ENCODE measurements at regions of chr13 and their contacts with region 1.

Region 1: GRCh38 chr13:27826379-27827353 is 34.4 kb downstream of the GSX1 start:
- DNase-seq: peak; percentile 76
- H3K4me3 Mint-ChIP-seq: no peak overlapping the region
- H3K27ac Mint-ChIP-seq: no peak overlapping the region
- H3K4me1 Mint-ChIP-seq: peaks cover 8% of the 10 kb centered on the region
- H3K27me3 Mint-ChIP-seq: peaks cover 56% of the 10 kb centered on the region

Region 2: DNA sequence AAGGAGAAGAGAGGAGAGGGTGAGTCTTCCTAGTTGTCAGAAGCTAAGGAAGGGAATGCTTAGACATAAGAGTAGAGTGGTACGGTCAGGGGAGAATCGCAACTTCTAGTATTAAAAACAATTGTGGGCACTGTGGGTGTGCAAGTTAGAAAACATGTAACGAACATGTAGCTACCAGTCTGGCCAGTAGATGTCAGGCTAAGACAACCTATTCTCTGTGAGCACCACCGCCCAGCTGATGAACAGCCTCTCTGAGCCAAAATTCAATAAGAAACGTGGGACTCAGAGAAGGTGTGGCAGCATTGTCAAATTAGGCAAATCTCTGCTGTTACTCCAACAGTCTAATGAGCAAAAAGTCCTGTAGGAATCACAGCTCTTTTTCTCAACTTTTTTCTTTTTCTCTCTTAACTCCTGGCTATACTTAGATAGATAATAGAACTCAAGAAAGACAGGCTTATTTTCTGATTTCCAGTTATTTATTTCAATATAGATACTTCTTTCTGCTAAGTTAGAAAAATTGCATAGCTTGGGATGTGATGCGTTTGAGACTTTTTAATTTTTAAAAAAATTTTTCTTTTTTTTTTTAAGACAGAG is 841.3 kb before region 1 on chr13:
- CTCF ChIA-PET with region 1: interaction called, 16 read pairs
- POLR2A ChIA-PET with region 1: no interaction called
- intact Hi-C with region 1: loop called (anchors 10 kb)
- DNase-seq: peak; percentile 79
- H3K4me3 Mint-ChIP-seq: no peak overlapping the region
- H3K27ac Mint-ChIP-seq: no peak overlapping the region
- H3K4me1 Mint-ChIP-seq: no peaks in the 10 kb centered on the region
- H3K27me3 Mint-ChIP-seq: peaks cover 9% of the 10 kb centered on the region

Region 3: GRCh38 chr13:27374650-27375049 is 452.0 kb before region 1 on chr13:
- CTCF ChIA-PET with region 1: interaction called, 209 read pairs
- POLR2A ChIA-PET with region 1: no interaction called
- intact Hi-C with region 1: loop called (anchors 1 kb)
- DNase-seq: peak; percentile 70
- H3K4me3 Mint-ChIP-seq: no peak overlapping the region
- H3K27ac Mint-ChIP-seq: no peak overlapping the region
- H3K4me1 Mint-ChIP-seq: peaks cover 5% of the 10 kb centered on the region
- H3K27me3 Mint-ChIP-seq: peaks cover 20% of the 10 kb centered on the region

Region 4: GRCh38 chr13:27533155-27533643 is 293.5 kb before region 1 on chr13:
- CTCF ChIA-PET with region 1: interaction called, 115 read pairs
- POLR2A ChIA-PET with region 1: no interaction called
- intact Hi-C with region 1: loop called (anchors 2 kb)
- DNase-seq: peak; percentile 67
- H3K4me3 Mint-ChIP-seq: no peak overlapping the region
- H3K27ac Mint-ChIP-seq: no peak overlapping the region
- H3K4me1 Mint-ChIP-seq: peaks cover 8% of the 10 kb centered on the region
- H3K27me3 Mint-ChIP-seq: no peaks in the 10 kb centered on the region

Region 5: GRCh38 chr13:27806744-27807387 is 19.8 kb before region 1 on chr13:
- CTCF ChIA-PET with region 1: interaction called, 15 read pairs
- POLR2A ChIA-PET with region 1: no interaction called
- intact Hi-C with region 1: no loop called
- DNase-seq: no peak
- H3K4me3 Mint-ChIP-seq: no peak overlapping the region
- H3K27ac Mint-ChIP-seq: no peak overlapping the region
- H3K4me1 Mint-ChIP-seq: no peaks in the 10 kb centered on the region
- H3K27me3 Mint-ChIP-seq: peaks cover 39% of the 10 kb centered on the region

Region 6: DNA sequence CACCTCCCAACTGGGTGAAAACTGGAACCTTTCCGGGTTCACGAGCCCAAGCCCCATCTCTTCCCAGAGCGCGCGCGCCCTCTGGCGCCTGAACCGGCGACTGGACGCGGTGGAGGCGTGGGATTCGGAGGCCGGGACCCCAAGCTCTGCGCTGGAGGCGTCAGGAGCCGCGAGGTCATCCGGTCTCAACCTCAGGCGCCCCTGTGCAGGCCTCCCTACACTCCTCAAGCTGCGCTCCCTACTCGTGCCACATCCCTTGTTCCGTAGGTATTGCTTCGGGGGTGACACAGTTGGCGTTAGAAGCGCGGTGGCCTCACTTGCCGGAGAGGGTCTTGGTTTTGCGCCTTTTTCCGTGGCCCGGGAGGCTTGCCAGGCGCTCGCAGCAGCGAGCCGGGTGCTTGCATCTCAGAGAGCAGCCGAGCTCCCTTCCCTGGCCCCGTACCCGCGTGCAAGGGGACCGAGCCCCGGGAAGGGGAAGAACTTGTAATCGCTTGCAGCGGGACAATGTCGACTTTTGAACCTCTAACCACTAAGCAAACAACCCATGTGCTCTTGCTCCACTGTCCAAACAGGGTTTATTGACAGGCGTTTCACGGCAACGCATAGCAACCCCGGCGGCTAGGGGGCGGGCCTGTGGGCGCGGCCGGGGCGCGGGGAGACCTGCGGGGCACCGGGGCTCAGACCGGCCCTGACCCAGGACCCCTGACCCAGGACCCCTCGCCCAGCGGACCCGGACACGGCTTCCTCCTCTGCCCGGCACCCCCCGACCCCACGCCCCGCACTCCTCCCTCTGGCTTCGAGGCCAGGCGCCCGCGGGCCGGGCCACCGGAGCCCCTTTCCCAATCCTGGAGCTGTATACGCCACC is 133.9 kb after region 1 on chr13:
- CTCF ChIA-PET with region 1: interaction called, 152 read pairs
- POLR2A ChIA-PET with region 1: no interaction called
- intact Hi-C with region 1: no loop called
- DNase-seq: peak; percentile 61
- H3K4me3 Mint-ChIP-seq: peak overlapping the region; percentile 8
- H3K27ac Mint-ChIP-seq: no peak overlapping the region
- H3K4me1 Mint-ChIP-seq: peaks cover 11% of the 10 kb centered on the region
- H3K27me3 Mint-ChIP-seq: peaks cover 61% of the 10 kb centered on the region

Region 7: GRCh38 chr13:28548872-28549271 is 722.2 kb after region 1 on chr13:
- CTCF ChIA-PET with region 1: no interaction called
- POLR2A ChIA-PET with region 1: no interaction called
- intact Hi-C with region 1: no loop called
- DNase-seq: no peak
- H3K4me3 Mint-ChIP-seq: no peak overlapping the region
- H3K27ac Mint-ChIP-seq: no peak overlapping the region
- H3K4me1 Mint-ChIP-seq: peaks cover 16% of the 10 kb centered on the region
- H3K27me3 Mint-ChIP-seq: peaks cover 19% of the 10 kb centered on the region